Tibial artery (tissue), 4 donors: ENCODE measurements at regions of chr14 and their contacts with region 1.

Region 1: DNA sequence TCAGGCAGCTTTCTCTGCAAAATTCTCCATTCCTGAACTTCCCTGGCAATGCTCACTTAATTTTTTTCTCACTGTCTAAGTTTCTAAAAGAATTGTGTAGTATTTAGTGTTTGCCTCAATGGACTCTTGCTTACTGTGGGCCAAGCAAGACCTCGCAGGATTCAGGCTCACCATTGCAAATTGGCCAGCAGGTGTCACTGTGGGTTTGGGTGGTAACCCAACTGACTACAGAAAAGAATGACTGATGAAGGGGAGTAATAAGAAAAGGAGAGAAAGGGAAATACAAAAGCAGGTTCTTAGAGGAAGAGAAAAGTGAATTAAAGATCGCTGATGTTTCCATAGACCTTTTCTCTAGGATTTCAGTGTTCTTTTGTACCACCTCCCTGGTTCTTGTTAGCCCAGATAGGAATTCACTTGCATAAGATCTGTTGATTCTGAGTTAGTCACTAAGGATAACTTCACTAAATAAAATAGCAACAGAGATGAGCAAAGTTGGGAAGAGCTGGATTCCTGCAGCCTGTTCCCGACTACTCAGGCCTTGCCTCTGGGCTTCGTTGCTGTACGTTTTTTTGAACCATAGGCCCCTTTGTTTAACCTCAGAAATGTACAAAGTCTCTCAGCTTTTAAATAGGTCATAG is 386.5 kb upstream of the DDHD1 start:
- DNase-seq: peak; percentile 73 to 82
- H3K4me3 ChIP-seq: no peak overlapping the region
- H3K27ac ChIP-seq: peak overlapping the region in 1 of 2 donors; percentile 4
- H3K4me1 ChIP-seq: peaks cover 0 to 6% (median 0%) of the 10 kb centered on the region in 4 donors
- H3K27me3 ChIP-seq: no peaks in the 10 kb centered on the region
- CTCF ChIP-seq: peak; percentile 75 to 77

Region 2: DNA sequence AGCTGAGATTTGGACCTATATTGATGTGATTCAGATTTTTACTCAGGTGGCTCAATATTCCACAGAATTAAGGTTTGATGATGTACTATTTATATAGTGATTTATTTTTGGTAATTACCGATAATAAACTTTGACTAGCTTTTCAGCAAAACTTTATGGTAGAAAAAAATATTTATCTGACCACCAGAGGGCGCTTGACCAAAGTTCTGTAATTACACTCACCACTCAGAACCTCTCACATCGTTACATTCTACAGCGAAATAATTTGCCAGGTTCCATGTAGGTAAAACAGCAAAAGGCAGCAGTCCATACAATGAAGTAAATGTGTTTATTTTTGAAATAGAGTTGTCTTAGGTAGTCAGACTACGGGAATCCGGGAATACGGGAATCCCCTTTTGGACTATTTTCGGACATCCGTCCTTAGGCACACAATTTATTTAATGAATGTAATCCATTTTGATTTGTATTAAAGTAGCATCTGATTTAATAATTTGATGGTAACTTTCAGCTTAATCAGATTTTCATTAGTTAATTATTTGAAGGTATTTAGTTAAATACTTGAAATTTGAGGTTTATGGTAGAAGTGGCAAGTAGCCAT is 243.5 kb before region 1 on chr14:
- intact Hi-C with region 1: loop called (anchors 5 kb)
- DNase-seq: no peak
- H3K4me3 ChIP-seq: no peak overlapping the region
- H3K27ac ChIP-seq: no peak overlapping the region
- H3K4me1 ChIP-seq: no peaks in the 10 kb centered on the region
- H3K27me3 ChIP-seq: no peaks in the 10 kb centered on the region
- CTCF ChIP-seq: peak; percentile 66 to 72

Region 3: DNA sequence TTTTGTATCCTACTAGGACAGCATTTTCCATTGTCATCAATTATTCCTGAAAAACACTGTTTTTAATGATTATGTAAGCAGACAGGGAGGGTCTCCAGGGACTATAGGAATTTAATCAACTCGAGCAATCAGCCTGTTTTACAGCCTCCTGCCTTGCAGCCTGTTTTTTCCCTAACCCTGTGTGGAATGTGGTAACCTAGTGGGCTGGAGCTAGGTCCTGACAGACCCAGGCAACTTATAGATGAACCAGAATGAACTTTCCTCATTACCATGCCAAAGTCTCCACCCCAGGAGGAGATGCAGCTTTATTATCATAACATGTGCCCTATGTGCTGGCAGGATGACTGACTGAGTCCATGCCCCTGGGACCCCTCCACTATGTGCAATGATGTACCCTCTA is 41.9 kb after region 1 on chr14:
- intact Hi-C with region 1: no loop called
- DNase-seq: no peak
- H3K4me3 ChIP-seq: no peak overlapping the region
- H3K27ac ChIP-seq: no peak overlapping the region
- H3K4me1 ChIP-seq: no peaks in the 10 kb centered on the region
- H3K27me3 ChIP-seq: no peaks in the 10 kb centered on the region
- CTCF ChIP-seq: no peak

Region 4: DNA sequence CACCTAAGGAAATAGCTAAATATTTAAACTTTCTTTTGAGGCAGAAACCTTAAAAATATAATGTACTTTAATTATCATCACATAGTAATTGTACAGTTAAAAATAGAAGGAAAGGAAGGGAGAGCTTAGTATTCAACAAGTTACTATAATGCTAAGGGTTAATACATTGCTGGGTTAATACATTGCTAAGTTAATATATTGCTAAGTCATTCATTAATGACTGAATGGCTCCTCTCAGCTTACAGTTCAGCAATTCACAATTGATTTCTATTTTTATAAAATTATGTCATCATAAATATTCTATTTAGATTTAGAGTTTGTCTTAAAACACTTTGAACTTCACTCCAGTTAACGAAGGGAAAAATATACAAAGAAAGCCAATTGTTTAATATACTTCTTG is 209.1 kb after region 1 on chr14:
- intact Hi-C with region 1: no loop called
- DNase-seq: no peak
- H3K4me3 ChIP-seq: no peak overlapping the region
- H3K27ac ChIP-seq: no peak overlapping the region
- H3K4me1 ChIP-seq: no peaks in the 10 kb centered on the region
- H3K27me3 ChIP-seq: no peaks in the 10 kb centered on the region
- CTCF ChIP-seq: no peak

Region 5: DNA sequence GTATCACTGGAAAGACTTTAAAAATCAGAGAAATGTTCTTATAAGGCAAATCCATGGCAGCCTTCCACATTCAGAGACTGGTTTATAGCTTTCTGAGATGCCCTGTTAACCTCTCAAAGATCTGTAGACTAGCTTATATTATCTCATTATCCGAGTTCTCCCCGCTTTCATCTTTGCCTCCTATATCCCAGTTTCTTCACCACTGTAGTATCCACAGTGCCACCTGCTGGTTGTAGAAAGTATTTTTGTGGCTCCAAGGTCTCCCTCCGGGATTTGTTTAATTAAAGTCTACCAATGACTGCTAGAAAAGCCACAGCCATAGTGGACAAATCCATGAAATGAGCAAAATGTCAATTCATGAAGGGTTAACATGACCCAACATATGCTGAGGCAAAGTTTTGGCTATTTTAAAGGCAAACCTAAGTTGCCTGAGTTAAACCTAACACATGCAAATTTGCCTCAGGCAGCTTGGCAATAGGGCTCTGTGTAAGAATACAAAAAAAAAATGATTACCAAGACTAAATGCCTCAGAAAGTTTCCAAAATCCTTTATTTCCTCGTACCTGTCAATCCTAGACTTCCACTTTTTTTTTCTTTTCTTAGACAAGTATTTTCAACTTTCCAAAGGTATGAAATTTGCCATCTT is 635.8 kb after region 1 on chr14:
- intact Hi-C with region 1: loop called (anchors 5 kb)
- DNase-seq: peak; percentile 67 to 69
- H3K4me3 ChIP-seq: no peak overlapping the region
- H3K27ac ChIP-seq: no peak overlapping the region
- H3K4me1 ChIP-seq: peaks cover 0 to 38% (median 25%) of the 10 kb centered on the region in 4 donors
- H3K27me3 ChIP-seq: no peaks in the 10 kb centered on the region
- CTCF ChIP-seq: peak; percentile 84 to 87

Region 6: GRCh38 chr14:54282849-54283248 is 743.2 kb after region 1 on chr14:
- intact Hi-C with region 1: no loop called
- DNase-seq: no peak
- H3K4me3 ChIP-seq: no peak overlapping the region
- H3K27ac ChIP-seq: no peak overlapping the region
- H3K4me1 ChIP-seq: no peaks in the 10 kb centered on the region
- H3K27me3 ChIP-seq: no peaks in the 10 kb centered on the region
- CTCF ChIP-seq: no peak

Region 7: GRCh38 chr14:54347997-54348611 is 808.5 kb after region 1 on chr14:
- intact Hi-C with region 1: loop called (anchors 10 kb)
- DNase-seq: no peak
- H3K4me3 ChIP-seq: no peak overlapping the region
- H3K27ac ChIP-seq: no peak overlapping the region
- H3K4me1 ChIP-seq: peaks cover 0 to 9% (median 0%) of the 10 kb centered on the region in 4 donors
- H3K27me3 ChIP-seq: no peaks in the 10 kb centered on the region
- CTCF ChIP-seq: peak; percentile 49 to 66